ENCODE measurements at regions of chr1 and their contacts with region 1.

Region 1: DNA sequence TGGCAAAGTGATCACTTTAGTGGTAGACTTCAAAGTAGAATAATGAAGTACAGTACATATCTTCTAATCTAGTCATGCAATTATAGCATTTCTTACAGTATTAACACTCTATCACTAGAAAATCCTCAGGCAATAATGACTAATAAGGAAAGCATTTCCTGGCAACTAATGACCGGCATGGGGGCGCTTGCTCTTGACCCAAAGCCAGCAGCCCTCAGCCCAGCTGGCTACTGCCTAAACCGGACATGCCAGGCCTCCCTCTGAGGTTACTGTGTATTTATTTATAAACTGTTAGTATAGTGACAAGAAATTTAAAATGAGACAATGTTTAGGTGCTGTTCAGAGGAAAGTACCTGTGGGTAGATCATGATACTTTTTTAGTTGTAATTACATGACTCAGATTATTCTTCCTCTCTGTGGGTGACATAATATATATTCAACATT is 633.8 kb downstream of the PTPRC start:
- DNase-seq: peak; percentile 26
- ATAC-seq: peak; percentile 38

Region 2: GRCh38 chr1:199336745-199337640 is 64.3 kb after region 1 on chr1:
- intact Hi-C with region 1: loop called (anchors 10 kb)
- DNase-seq: no peak
- ATAC-seq: no peak

Measured in left ventricle myocardium superior (tissue), 1 donor.